ENCODE measurements at regions of chr11 and their contacts with region 1.

Region 1: DNA sequence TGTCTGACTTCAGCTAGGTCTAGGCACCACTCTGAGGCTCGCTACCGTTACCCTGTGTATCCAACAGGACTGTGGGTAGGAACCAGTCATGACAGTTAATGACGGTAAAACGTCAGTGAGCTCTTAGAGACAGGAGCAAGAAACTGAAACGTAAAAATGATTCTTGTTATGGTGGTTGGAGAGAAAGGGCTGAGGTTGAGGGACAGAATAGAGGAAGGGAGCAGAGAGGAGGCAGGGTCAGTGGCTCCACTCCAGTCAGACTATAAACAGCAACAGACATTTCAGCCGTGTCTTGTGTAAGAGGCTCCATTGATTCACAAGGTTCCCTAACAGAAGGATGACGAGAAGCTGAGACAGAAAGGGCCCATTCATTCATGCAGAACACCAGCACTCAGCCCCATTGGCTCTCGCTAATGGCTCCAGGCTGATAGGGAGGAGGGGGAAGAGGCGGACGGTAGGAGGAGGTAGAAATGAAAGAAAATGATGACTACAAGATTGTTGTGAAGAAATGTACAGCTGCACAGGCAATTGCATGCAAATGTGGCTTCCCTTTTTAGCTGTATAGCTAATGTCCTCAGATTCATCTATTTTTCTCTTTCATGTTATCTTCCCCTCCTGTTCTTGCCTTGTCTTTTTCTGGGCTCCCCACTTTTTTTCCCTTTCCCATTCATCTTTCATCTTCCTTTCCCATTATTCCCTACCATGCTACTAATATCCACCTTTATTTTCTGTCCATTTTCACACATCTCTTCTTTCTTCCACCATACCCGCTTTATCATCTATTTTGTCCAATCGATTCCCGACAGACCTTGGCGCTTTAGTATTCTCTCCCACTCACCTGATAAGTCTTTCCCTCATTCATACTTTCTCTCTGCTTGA is 34.3 kb downstream of the ETS1 start:
- DNase-seq: no peak
- H3K4me3 ChIP-seq: no peak overlapping the region
- H3K27ac ChIP-seq: no peak overlapping the region
- H3K4me1 ChIP-seq: peaks cover 11% of the 10 kb centered on the region
- H3K27me3 ChIP-seq: peaks cover 4 to 6% of the 10 kb centered on the region in 2 experiments
- CTCF ChIP-seq: no peak
- POLR2A ChIP-seq: no peak

Region 2: GRCh38 chr11:128195057-128195751 is 357.8 kb before region 1 on chr11:
- CTCF ChIA-PET with region 1: no interaction called
- POLR2A ChIA-PET with region 1: no interaction called
- dilution Hi-C with region 1: no loop called
- intact Hi-C with region 1: loop called (anchors 2 kb)
- DNase-seq: peak; percentile 98
- H3K4me3 ChIP-seq: no peak overlapping the region
- H3K27ac ChIP-seq: peak overlapping the region; percentile 65
- H3K4me1 ChIP-seq: peaks cover 12% of the 10 kb centered on the region
- H3K27me3 ChIP-seq: no peaks in the 10 kb centered on the region
- CTCF ChIP-seq: peak in 1 of 2 donors; percentile 9
- POLR2A ChIP-seq: peak; percentile 60

Region 3: GRCh38 chr11:128336203-128336602 is 216.8 kb before region 1 on chr11:
- CTCF ChIA-PET with region 1: interaction called, 3 read pairs
- POLR2A ChIA-PET with region 1: no interaction called
- dilution Hi-C with region 1: no loop called
- intact Hi-C with region 1: loop called (anchors 1 kb)
- DNase-seq: peak; percentile 88
- H3K4me3 ChIP-seq: no peak overlapping the region
- H3K27ac ChIP-seq: peak overlapping the region; percentile 87
- H3K4me1 ChIP-seq: peaks cover 43% of the 10 kb centered on the region
- H3K27me3 ChIP-seq: no peaks in the 10 kb centered on the region
- CTCF ChIP-seq: no peak
- POLR2A ChIP-seq: peak; percentile 17

Region 4: GRCh38 chr11:128482512-128483191 is 70.4 kb before region 1 on chr11:
- CTCF ChIA-PET with region 1: no interaction called
- POLR2A ChIA-PET with region 1: no interaction called
- dilution Hi-C with region 1: no loop called
- intact Hi-C with region 1: no loop called
- DNase-seq: no peak
- H3K4me3 ChIP-seq: no peak overlapping the region
- H3K27ac ChIP-seq: peak overlapping the region; percentile 4
- H3K4me1 ChIP-seq: peaks cover 4% of the 10 kb centered on the region
- H3K27me3 ChIP-seq: no peaks in the 10 kb centered on the region
- CTCF ChIP-seq: no peak
- POLR2A ChIP-seq: no peak

Region 5: GRCh38 chr11:128506999-128507611 is 45.9 kb before region 1 on chr11:
- CTCF ChIA-PET with region 1: no interaction called
- POLR2A ChIA-PET with region 1: no interaction called
- dilution Hi-C with region 1: no loop called
- intact Hi-C with region 1: loop called (anchors 1 kb)
- DNase-seq: peak; percentile 88
- H3K4me3 ChIP-seq: peak overlapping the region in 1 of 3 experiments; percentile 12
- H3K27ac ChIP-seq: peak overlapping the region; percentile 89
- H3K4me1 ChIP-seq: peaks cover 66% of the 10 kb centered on the region
- H3K27me3 ChIP-seq: no peaks in the 10 kb centered on the region
- CTCF ChIP-seq: no peak
- POLR2A ChIP-seq: peak; percentile 57

Region 6: GRCh38 chr11:128575961-128576350 is 22.9 kb after region 1 on chr11:
- CTCF ChIA-PET with region 1: interaction called, 14 read pairs
- POLR2A ChIA-PET with region 1: no interaction called
- dilution Hi-C with region 1: no loop called
- intact Hi-C with region 1: loop called (anchors 1 kb)
- DNase-seq: peak; percentile 96
- H3K4me3 ChIP-seq: no peak overlapping the region
- H3K27ac ChIP-seq: peak overlapping the region; percentile 84
- H3K4me1 ChIP-seq: peaks cover 43% of the 10 kb centered on the region
- H3K27me3 ChIP-seq: no peaks in the 10 kb centered on the region
- CTCF ChIP-seq: no peak
- POLR2A ChIP-seq: peak; percentile 28

Region 7: DNA sequence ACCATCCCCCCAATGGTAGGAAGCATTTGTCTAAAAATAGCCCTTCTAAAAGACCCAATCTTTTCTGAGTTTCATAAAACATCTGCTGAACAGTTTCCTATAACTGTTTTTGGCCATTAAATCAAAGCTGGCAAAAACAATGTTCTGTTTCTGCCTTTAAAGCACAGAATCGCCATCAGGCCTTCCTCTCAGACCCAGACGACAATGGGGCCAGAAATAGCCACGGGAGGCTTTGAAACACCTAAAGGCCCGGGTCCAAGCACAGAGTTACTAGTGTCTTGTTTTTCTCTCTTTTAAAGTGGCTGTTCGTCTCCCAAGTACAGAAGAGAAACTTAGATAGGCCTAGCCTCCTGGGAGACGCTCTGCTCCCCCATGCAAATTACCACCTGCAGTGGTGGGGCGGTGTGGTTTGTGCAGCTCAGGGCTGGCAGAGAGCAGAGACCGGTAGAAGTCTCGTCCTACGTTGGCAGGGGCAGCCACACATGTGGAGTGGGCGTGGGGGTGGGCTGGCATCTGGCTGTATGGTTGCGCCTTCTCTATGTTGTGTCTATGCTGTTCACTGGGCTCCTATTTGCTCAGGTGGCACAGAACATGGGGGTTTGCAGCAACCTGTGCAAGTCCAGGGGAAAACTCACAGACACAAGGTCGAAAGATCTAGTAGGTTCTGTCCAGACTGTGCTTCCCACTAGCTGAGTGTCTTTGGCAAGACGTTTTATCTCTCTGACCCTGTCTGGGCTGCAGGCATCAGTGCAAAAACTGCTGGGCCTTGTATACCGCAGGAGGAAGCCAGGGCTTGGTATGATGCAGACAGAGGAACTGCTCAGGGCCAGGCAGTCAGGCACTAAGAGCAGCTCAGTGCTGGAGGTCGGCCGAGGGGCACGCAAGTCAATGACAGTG is 57.9 kb after region 1 on chr11:
- CTCF ChIA-PET with region 1: no interaction called
- POLR2A ChIA-PET with region 1: no interaction called
- dilution Hi-C with region 1: no loop called
- intact Hi-C with region 1: loop called (anchors 2 kb)
- DNase-seq: peak; percentile 79
- H3K4me3 ChIP-seq: no peak overlapping the region
- H3K27ac ChIP-seq: no peak overlapping the region
- H3K4me1 ChIP-seq: peaks cover 3% of the 10 kb centered on the region
- H3K27me3 ChIP-seq: peaks cover 6 to 29% of the 10 kb centered on the region in 2 experiments
- CTCF ChIP-seq: no peak
- POLR2A ChIP-seq: no peak

Region 8: DNA sequence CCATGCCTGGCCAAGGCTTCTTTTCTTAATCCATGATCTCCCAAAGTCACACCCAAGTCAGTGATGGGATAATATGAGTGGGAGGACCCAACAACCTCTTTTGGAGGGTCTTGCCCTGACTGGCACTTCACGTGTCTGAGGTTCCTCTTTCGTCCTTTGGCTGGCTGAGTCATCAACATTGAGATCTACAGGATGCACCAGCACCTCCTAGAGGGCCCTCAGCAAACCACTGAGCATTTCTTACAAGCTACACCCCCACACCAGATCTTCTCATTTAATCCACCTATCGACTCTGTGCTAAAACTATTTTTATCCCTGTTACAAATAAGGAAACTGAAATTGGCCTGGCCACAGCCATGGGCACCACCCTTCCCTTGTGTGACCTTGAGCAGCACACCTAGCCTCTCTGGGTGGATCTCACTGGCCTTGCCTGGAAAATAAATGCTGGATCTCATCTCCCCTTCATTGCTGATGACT is 204.3 kb after region 1 on chr11:
- CTCF ChIA-PET with region 1: no interaction called
- POLR2A ChIA-PET with region 1: interaction called, 4 read pairs
- dilution Hi-C with region 1: no loop called
- intact Hi-C with region 1: loop called (anchors 1 kb)
- DNase-seq: peak; percentile 75
- H3K4me3 ChIP-seq: no peak overlapping the region
- H3K27ac ChIP-seq: peak overlapping the region; percentile 21
- H3K4me1 ChIP-seq: peaks cover 19% of the 10 kb centered on the region
- H3K27me3 ChIP-seq: no peaks in the 10 kb centered on the region
- CTCF ChIP-seq: peak; percentile 55 to 61
- POLR2A ChIP-seq: no peak

Region 9: GRCh38 chr11:129402772-129403171 is 849.8 kb after region 1 on chr11:
- CTCF ChIA-PET with region 1: no interaction called
- POLR2A ChIA-PET with region 1: no interaction called
- dilution Hi-C with region 1: no loop called
- intact Hi-C with region 1: no loop called
- DNase-seq: no peak
- H3K4me3 ChIP-seq: no peak overlapping the region
- H3K27ac ChIP-seq: no peak overlapping the region
- H3K4me1 ChIP-seq: no peaks in the 10 kb centered on the region
- H3K27me3 ChIP-seq: no peaks in the 10 kb centered on the region
- CTCF ChIP-seq: no peak
- POLR2A ChIP-seq: no peak